Activated B cell treated with CpG ODN at 0.5 μM for 24 hours (primary cell): ENCODE measurements at regions of chr2 and their contacts with region 1.

Region 1: DNA sequence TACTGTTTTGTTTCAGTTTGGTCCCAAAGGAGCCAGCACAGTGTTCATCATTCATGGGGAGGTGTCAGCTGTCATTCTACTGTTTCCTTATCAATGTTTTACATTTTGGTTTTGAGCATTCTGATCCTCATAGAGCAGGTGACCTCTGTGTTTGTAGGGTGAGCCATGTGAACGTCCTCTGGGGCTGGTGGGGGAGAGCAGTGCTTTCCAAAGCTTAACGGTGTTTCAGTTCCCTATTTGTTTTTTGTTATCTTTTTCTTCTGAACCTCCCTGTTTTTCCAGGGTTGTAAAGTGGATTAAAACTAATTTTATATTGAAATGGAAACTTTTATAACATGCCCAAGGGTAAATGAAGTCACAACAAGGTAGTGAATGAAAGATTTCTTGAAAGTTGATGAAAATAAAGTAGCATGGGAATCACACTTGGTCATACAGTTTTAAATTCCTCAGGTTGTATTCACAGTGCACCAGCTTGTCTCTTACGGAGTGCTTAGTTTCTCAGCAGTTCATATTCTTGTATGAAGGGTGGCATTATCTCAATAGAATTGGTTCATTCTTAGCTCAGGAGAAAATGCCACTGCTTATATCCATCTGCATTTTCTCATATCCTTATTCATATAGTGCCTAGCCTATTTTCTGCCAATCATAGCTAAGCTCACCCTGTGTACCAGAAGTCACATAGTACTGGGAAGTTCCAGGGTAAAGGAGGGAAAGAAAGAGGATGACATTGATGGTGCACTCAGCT is 54.5 kb downstream of the MAP4K4 start:
- DNase-seq: no peak
- ATAC-seq: peak; percentile 83
- H3K4me3 Mint-ChIP-seq: peak overlapping the region; percentile 65
- H3K27ac Mint-ChIP-seq: peak overlapping the region; percentile 76
- H3K4me1 Mint-ChIP-seq: peaks cover 81% of the 10 kb centered on the region
- H3K27me3 Mint-ChIP-seq: no peaks in the 10 kb centered on the region
- CTCF ChIP-seq: no peak

Region 2: DNA sequence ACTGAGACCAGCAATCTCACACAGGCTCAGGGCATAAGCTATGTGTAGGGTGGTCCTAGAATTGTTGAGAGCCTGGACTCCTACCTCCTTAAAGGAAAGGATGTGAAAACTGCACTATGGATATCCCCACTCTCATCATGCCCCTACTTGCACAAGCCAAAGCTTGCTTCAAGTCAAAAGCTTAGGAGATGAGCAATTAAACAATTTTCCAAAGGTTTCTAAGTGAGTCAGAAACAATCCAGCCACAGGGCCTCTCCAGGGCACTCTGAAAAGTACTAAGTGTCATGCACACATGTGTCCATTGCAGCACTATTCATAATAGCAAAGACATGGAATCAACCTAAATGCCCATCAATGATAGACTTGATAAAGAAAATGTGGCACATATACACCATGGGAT is 1825.1 kb before region 1 on chr2:
- CTCF ChIA-PET with region 1: no interaction called
- POLR2A ChIA-PET with region 1: no interaction called
- intact Hi-C with region 1: no loop called
- DNase-seq: no peak
- ATAC-seq: no peak
- H3K4me3 Mint-ChIP-seq: no peak overlapping the region
- H3K27ac Mint-ChIP-seq: peak overlapping the region; percentile 91
- H3K4me1 Mint-ChIP-seq: peaks cover 85% of the 10 kb centered on the region
- H3K27me3 Mint-ChIP-seq: no peaks in the 10 kb centered on the region
- CTCF ChIP-seq: no peak

Region 3: GRCh38 chr2:101710471-101711318 is 41.4 kb before region 1 on chr2:
- CTCF ChIA-PET with region 1: no interaction called
- POLR2A ChIA-PET with region 1: interaction called, 11 read pairs
- intact Hi-C with region 1: no loop called
- DNase-seq: no peak
- ATAC-seq: peak; percentile 78
- H3K4me3 Mint-ChIP-seq: peak overlapping the region; percentile 65
- H3K27ac Mint-ChIP-seq: peak overlapping the region; percentile 85
- H3K4me1 Mint-ChIP-seq: peaks cover 53% of the 10 kb centered on the region
- H3K27me3 Mint-ChIP-seq: no peaks in the 10 kb centered on the region
- CTCF ChIP-seq: no peak

Region 4: DNA sequence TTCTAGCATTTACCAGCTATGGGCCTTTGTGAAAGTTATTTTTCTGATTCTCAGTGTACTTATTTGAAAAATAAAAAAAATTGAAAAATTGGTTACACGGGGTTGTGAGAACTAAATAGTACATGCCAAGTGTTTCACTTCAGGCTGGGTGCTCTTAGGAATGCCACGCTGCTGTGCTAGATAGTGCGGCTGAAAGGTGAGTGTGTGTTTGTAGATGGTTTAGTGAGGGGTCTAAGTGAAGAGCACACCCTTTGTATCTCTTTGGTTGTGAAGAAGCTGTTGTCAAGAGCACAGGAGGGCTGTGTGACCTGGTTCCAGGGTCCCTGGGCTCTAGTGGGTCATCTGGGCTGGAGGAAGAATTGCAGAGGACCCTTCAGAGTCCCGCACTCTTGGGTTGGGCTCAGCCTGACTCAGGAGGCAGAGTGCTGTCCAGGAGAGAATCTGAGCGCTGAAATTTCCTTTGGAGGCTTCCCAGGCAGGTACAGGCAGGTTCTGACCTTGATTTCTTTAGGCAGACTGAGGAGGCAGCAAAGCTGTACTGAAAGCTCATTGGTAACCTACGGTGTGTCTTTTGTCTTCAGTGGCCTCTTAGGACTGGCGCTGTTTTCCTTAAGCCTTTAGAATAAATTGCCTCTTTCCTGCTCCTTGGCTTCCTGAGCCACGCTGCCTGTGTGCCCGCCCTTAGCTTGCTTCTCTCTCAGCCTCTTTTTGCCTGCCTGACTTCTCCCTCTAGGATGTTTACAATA is 10.1 kb before region 1 on chr2:
- CTCF ChIA-PET with region 1: no interaction called
- POLR2A ChIA-PET with region 1: interaction called, 6 read pairs
- intact Hi-C with region 1: loop called (anchors 1 kb)
- DNase-seq: no peak
- ATAC-seq: no peak
- H3K4me3 Mint-ChIP-seq: peak overlapping the region; percentile 13
- H3K27ac Mint-ChIP-seq: peak overlapping the region; percentile 70
- H3K4me1 Mint-ChIP-seq: peaks cover 92% of the 10 kb centered on the region
- H3K27me3 Mint-ChIP-seq: no peaks in the 10 kb centered on the region
- CTCF ChIP-seq: no peak

Region 5: DNA sequence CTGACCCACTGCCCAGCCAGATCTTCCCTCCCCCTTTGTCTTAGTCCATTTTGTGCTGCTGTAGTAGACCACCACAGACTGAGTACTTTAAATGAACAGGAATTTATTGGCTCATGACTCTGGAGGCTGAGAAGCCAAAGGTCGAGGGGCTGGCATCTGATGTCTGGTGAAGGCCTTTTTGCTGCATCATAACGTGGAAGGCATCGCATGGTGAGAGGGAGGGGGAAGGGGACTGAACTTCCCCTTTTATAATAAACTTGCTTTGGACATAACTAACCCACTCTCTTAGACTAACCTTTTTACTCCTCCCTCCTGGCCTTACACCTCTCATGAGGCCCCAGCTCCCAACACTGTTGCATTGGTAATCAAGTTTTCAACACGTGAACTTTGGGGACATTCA is 29.3 kb after region 1 on chr2:
- CTCF ChIA-PET with region 1: no interaction called
- POLR2A ChIA-PET with region 1: interaction called, 16 read pairs
- intact Hi-C with region 1: no loop called
- DNase-seq: no peak
- ATAC-seq: peak; percentile 89
- H3K4me3 Mint-ChIP-seq: peak overlapping the region; percentile 69
- H3K27ac Mint-ChIP-seq: peak overlapping the region; percentile 87
- H3K4me1 Mint-ChIP-seq: peaks cover 95% of the 10 kb centered on the region
- H3K27me3 Mint-ChIP-seq: no peaks in the 10 kb centered on the region
- CTCF ChIP-seq: no peak

Region 6: GRCh38 chr2:102206666-102207341 is 454.8 kb after region 1 on chr2:
- CTCF ChIA-PET with region 1: no interaction called
- POLR2A ChIA-PET with region 1: no interaction called
- intact Hi-C with region 1: no loop called
- DNase-seq: no peak
- ATAC-seq: no peak
- H3K4me3 Mint-ChIP-seq: no peak overlapping the region
- H3K27ac Mint-ChIP-seq: no peak overlapping the region
- H3K4me1 Mint-ChIP-seq: no peaks in the 10 kb centered on the region
- H3K27me3 Mint-ChIP-seq: peaks cover 4% of the 10 kb centered on the region
- CTCF ChIP-seq: no peak